Esophagus squamous epithelium (tissue), 5 donors: ENCODE measurements at regions of chr6 and their contacts with region 1.

Region 1: GRCh38 chr6:52839119-52840055 is 1.2 kb downstream of the GSTA5 start:
- DNase-seq: no peak
- H3K4me3 ChIP-seq: no peak overlapping the region
- H3K27ac ChIP-seq: no peak overlapping the region
- H3K4me1 ChIP-seq: peaks cover 0 to 5% (median 0%) of the 10 kb centered on the region in 3 donors
- H3K27me3 ChIP-seq: peaks cover 0 to 17% (median 0%) of the 10 kb centered on the region in 4 donors
- CTCF ChIP-seq: peak in 5 of 6 experiments; percentile 38 to 81 (median 59)
- POLR2A ChIP-seq: no peak

Region 2: DNA sequence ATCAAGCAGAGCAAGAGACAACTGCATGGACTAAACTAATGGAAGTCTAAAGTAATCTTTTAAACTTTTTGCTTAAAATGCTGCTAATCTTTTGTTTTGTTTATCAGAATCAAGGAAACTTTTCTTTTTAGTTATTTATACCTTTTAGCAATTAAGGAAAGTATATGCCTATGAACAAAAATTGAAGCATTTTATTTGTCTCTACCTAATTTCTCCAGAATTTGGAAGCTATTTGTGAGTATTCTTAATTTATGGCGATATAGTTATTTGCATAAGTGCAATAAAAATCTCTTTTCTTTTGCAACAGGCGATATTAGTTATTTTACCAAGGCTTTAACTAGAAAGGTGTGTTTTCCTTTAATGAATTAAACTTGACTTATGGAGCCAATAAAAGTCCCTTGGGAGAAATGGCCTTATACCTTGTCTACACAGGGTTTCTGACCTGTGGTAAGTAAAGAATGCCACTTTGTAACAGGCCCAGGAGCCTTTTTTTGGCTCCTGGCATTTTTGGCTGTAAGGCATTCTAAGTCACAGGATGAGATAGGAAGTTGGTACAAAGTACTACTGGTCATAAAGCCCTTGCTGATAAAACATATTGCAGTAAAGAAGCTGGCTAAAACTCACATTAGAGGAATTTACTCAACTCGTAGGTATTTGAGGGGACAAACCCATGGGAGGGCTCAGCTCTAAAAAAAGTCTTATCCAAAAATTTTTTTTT is 131.3 kb before region 1 on chr6:
- intact Hi-C with region 1: loop called (anchors 10 kb)
- DNase-seq: no peak
- H3K4me3 ChIP-seq: no peak overlapping the region
- H3K27ac ChIP-seq: no peak overlapping the region
- H3K4me1 ChIP-seq: peaks cover 0 to 7% (median 3%) of the 10 kb centered on the region in 3 donors
- H3K27me3 ChIP-seq: no peaks in the 10 kb centered on the region
- CTCF ChIP-seq: no peak
- POLR2A ChIP-seq: no peak

Region 3: GRCh38 chr6:52779237-52779636 is 60.1 kb before region 1 on chr6:
- intact Hi-C with region 1: no loop called
- DNase-seq: no peak
- H3K4me3 ChIP-seq: no peak overlapping the region
- H3K27ac ChIP-seq: peak overlapping the region in 2 of 4 donors; percentile 34 to 36
- H3K4me1 ChIP-seq: peaks cover 0 to 36% (median 0%) of the 10 kb centered on the region in 3 donors
- H3K27me3 ChIP-seq: no peaks in the 10 kb centered on the region
- CTCF ChIP-seq: no peak
- POLR2A ChIP-seq: no peak

Region 4: GRCh38 chr6:53573299-53573698 is 733.9 kb after region 1 on chr6:
- intact Hi-C with region 1: no loop called
- DNase-seq: no peak
- H3K4me3 ChIP-seq: no peak overlapping the region
- H3K27ac ChIP-seq: no peak overlapping the region
- H3K4me1 ChIP-seq: peaks cover 0 to 9% (median 6%) of the 10 kb centered on the region in 3 donors
- H3K27me3 ChIP-seq: no peaks in the 10 kb centered on the region
- CTCF ChIP-seq: no peak
- POLR2A ChIP-seq: no peak